ENCODE measurements at regions of chr6 and their contacts with region 1.

Region 1: GRCh38 chr6:72084992-72085569 is 198.7 kb downstream of the RIMS1 start:
- DNase-seq: no peak
- ATAC-seq: no peak
- H3K4me3 ChIP-seq: no peak overlapping the region
- H3K27ac ChIP-seq: no peak overlapping the region
- H3K4me1 ChIP-seq: no peaks in the 10 kb centered on the region
- H3K27me3 ChIP-seq: no peaks in the 10 kb centered on the region
- CTCF ChIP-seq: 0 out of 2 replicates have a peak, but pooled peaks have one; percentile 24
- EP300 ChIP-seq: no peak
- POLR2A ChIP-seq: no peak
- RAD21 ChIP-seq: no peak

Region 2: GRCh38 chr6:71533939-71534379 is 551.1 kb before region 1 on chr6:
- CTCF ChIA-PET with region 1: interaction called, 10 read pairs
- POLR2A ChIA-PET with region 1: no interaction called
- in situ Hi-C with region 1: loop called (anchors 5 kb)
- intact Hi-C with region 1: loop called (anchors 2 kb)
- DNase-seq: peak; percentile 2
- ATAC-seq: no peak
- H3K4me3 ChIP-seq: no peak overlapping the region
- H3K27ac ChIP-seq: no peak overlapping the region
- H3K4me1 ChIP-seq: no peaks in the 10 kb centered on the region
- H3K27me3 ChIP-seq: peaks cover 0 to 1% of the 10 kb centered on the region in 2 experiments; a peak in 1 of 5 replicates
- CTCF ChIP-seq: peak; percentile 43
- EP300 ChIP-seq: no peak
- POLR2A ChIP-seq: no peak
- RAD21 ChIP-seq: no peak

Region 3: GRCh38 chr6:71621918-71622519 is 463.1 kb before region 1 on chr6:
- CTCF ChIA-PET with region 1: interaction called, 3 read pairs
- POLR2A ChIA-PET with region 1: no interaction called
- in situ Hi-C with region 1: loop called (anchors 25 kb)
- intact Hi-C with region 1: no loop called
- DNase-seq: peak; percentile 2
- ATAC-seq: peak; percentile 37; the same call in 1 of the 3 replicates
- H3K4me3 ChIP-seq: no peak overlapping the region
- H3K27ac ChIP-seq: no peak overlapping the region
- H3K4me1 ChIP-seq: no peaks in the 10 kb centered on the region
- H3K27me3 ChIP-seq: no peaks in the 10 kb centered on the region
- CTCF ChIP-seq: peak; percentile 30; the same call in 1 of the 2 replicates
- EP300 ChIP-seq: no peak
- POLR2A ChIP-seq: no peak
- RAD21 ChIP-seq: no peak

Region 4: DNA sequence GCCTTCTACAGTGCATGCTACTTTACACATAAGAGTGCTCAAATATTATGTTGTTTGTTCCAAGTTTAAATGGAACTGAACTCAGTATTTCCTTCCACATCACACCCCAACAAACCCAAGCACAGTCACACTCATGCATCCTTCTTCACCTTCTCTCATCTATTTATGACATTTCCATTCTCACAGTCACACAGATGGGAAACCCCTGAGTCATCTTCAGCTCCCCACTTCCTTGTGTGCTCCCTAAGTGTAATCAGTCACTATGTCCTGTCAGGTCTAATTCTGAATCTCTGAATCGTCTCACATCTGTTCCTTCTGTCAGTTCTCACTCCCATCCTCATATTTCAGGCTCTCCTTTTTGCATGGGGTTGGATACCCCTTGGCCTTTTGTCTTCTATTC is 102.7 kb before region 1 on chr6:
- CTCF ChIA-PET with region 1: no interaction called
- POLR2A ChIA-PET with region 1: no interaction called
- in situ Hi-C with region 1: no loop called
- intact Hi-C with region 1: no loop called
- DNase-seq: no peak
- ATAC-seq: no peak
- H3K4me3 ChIP-seq: no peak overlapping the region
- H3K27ac ChIP-seq: no peak overlapping the region
- H3K4me1 ChIP-seq: no peaks in the 10 kb centered on the region
- H3K27me3 ChIP-seq: no peaks in the 10 kb centered on the region
- CTCF ChIP-seq: no peak
- EP300 ChIP-seq: no peak
- POLR2A ChIP-seq: no peak
- RAD21 ChIP-seq: no peak

Measured in HepG2 (cell line).